Activated T-helper 2 cell treated with anti-CD3 and anti-CD28 coated beads, Interferon-gamma antibody, Interleukin-2, Interleukin-4, amounts not matched to agents 10 μg/mL and 5 μg/mL and 100 μg/mL, durations not matched to agents 14 hours and 24 hours and 36 hours (primary cell): ENCODE measurements at regions of chr13 and their contacts with region 1.

Region 1: DNA sequence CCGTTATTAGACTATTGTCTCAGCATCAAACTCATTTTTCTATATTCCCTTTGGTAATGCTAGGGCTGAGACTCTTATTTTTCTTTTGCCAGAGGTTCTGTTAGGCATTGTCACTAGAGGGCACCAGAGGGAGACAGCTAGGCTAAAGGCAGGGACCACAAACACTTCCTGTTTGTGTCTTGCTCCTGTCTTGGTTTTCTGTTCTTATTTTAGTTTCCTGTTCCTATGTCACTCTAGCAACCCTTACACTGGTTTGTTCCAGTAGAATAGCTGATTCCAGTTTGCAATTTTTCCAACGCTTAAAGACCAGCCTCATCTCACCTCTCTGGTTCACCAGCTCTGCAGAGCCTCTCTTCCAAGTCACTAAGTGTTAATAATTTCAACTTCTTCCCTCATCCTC is 772.0 kb downstream of the DIAPH3 start:
- DNase-seq: peak; percentile 35
- H3K4me3 Mint-ChIP-seq: no peak overlapping the region
- H3K27ac Mint-ChIP-seq: no peak overlapping the region
- H3K4me1 Mint-ChIP-seq: no peaks in the 10 kb centered on the region
- H3K27me3 Mint-ChIP-seq: peaks cover 14% of the 10 kb centered on the region

Region 2: DNA sequence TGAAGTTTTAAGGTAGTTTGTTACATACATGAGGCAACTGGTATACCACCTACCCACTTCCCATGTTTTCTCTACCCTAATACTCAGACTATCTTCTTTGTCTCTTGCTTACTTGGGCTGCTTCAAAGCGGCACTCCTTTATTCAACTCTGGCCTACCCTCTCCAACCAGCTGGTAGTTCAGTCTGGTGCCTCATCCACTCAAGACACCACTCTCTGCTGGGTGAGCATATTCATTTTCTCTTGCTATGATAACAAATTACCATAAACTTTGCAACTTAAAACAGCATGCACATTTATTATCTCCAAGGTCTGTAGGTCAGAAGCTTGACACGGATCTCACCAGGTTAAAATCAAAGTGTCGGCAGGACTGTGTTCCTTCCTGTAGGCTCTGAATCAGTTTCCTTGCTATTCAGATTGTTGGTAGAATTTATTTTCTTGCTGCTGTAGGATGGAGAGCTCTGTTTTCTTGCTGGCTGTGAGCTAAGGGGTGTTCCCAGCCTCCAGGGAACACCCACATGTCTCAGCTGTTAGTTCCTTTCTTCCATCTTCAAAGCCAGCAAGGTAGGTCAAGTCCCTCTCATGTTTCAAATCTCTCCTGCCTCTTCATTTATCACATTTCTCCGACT is 106.0 kb after region 1 on chr13:
- intact Hi-C with region 1: no loop called
- DNase-seq: no peak
- H3K4me3 Mint-ChIP-seq: no peak overlapping the region
- H3K27ac Mint-ChIP-seq: no peak overlapping the region
- H3K4me1 Mint-ChIP-seq: peaks cover 2% of the 10 kb centered on the region
- H3K27me3 Mint-ChIP-seq: no peaks in the 10 kb centered on the region

Region 3: GRCh38 chr13:59906413-59907049 is 514.8 kb after region 1 on chr13:
- intact Hi-C with region 1: loop called (anchors 5 kb)
- DNase-seq: no peak
- H3K4me3 Mint-ChIP-seq: no peak overlapping the region
- H3K27ac Mint-ChIP-seq: no peak overlapping the region
- H3K4me1 Mint-ChIP-seq: peaks cover 3% of the 10 kb centered on the region
- H3K27me3 Mint-ChIP-seq: no peaks in the 10 kb centered on the region

Region 4: GRCh38 chr13:60335531-60335930 is 943.8 kb after region 1 on chr13:
- intact Hi-C with region 1: loop called (anchors 1 kb)
- DNase-seq: no peak
- H3K4me3 Mint-ChIP-seq: no peak overlapping the region
- H3K27ac Mint-ChIP-seq: no peak overlapping the region
- H3K4me1 Mint-ChIP-seq: no peaks in the 10 kb centered on the region
- H3K27me3 Mint-ChIP-seq: peaks cover 33% of the 10 kb centered on the region